Gastrocnemius medialis (tissue), 4 donors: ENCODE measurements at regions of chr4 and their contacts with region 1.

Region 1: GRCh38 chr4:164731827-164732474 is 22.0 kb upstream of the SMIM31 start:
- DNase-seq: peak in 1 of 2 donors; percentile 14
- ATAC-seq: peak in 1 of 2 donors; percentile 53
- H3K4me3 ChIP-seq: no peak overlapping the region
- H3K27ac ChIP-seq: no peak overlapping the region
- H3K4me1 ChIP-seq: peaks cover 6 to 8% of the 10 kb centered on the region in 2 donors
- H3K27me3 ChIP-seq: no peaks in the 10 kb centered on the region
- CTCF ChIP-seq: peak; percentile 41 to 67 (median 54)
- POLR2A ChIP-seq: no peak

Region 2: DNA sequence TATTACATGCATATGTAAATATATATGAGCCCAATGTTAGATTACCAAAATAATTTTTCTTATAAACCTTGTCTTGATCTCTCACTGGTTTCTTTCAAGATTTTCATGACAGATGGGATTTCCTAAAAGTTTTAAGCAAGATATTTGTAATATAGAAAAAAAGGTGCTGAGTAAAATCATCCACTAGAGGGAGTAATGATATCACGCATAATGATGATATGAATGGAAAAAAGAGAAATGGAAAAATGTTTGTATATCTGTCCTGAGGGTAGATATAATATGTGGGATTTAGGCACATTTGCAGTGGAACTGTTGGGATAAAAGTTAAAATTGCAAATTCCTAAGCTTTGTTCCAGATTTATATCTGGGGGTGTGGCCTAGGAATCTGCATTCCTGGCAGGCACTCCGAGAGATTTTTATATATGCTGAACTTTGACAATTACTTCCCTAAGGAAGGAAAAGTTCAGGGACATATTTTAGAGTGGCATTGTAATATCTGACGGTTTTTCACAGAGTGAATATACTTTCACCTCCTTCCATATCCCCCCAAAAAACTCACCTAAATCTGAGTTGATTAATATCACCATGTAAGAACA is 1177.0 kb before region 1 on chr4:
- in situ Hi-C with region 1: loop called in 1 of 4 experiments (anchors 25 kb)
- intact Hi-C with region 1: loop called (anchors 5 kb)
- DNase-seq: no peak
- ATAC-seq: no peak
- H3K4me3 ChIP-seq: no peak overlapping the region
- H3K27ac ChIP-seq: no peak overlapping the region
- H3K4me1 ChIP-seq: no peaks in the 10 kb centered on the region
- H3K27me3 ChIP-seq: no peaks in the 10 kb centered on the region
- CTCF ChIP-seq: peak in 3 of 5 experiments; percentile 20 to 54 (median 34)
- POLR2A ChIP-seq: no peak

Region 3: DNA sequence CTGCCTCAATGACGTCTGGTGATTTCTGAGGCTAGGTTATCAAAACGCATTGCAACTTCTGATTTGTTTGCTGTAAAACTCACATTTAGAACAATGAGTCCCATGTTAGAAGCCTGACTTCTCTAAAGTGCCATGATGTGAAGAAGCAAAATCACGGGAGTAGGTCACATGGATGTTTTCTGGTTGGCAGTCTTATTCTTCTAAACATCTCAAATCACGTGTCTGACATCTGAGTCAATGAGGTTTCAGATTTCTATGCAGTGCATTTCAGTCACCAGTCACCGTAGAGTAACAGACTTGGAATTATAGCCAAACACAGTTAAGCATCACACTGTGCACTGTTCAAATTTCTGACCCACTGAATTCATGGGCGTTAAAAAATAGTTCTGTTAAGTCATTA is 755.4 kb before region 1 on chr4:
- in situ Hi-C with region 1: no loop called
- intact Hi-C with region 1: no loop called
- DNase-seq: no peak
- ATAC-seq: no peak
- H3K4me3 ChIP-seq: no peak overlapping the region
- H3K27ac ChIP-seq: no peak overlapping the region
- H3K4me1 ChIP-seq: no peaks in the 10 kb centered on the region
- H3K27me3 ChIP-seq: no peaks in the 10 kb centered on the region
- CTCF ChIP-seq: no peak
- POLR2A ChIP-seq: no peak

Region 4: GRCh38 chr4:164606478-164606877 is 125.5 kb before region 1 on chr4:
- in situ Hi-C with region 1: no loop called
- intact Hi-C with region 1: no loop called
- DNase-seq: no peak
- ATAC-seq: no peak
- H3K4me3 ChIP-seq: no peak overlapping the region
- H3K27ac ChIP-seq: no peak overlapping the region
- H3K4me1 ChIP-seq: no peaks in the 10 kb centered on the region
- H3K27me3 ChIP-seq: no peaks in the 10 kb centered on the region
- CTCF ChIP-seq: no peak
- POLR2A ChIP-seq: no peak